Activated CD4-positive, alpha-beta memory T cell treated with anti-CD3 and anti-CD28 coated beads for 36 hours (primary cell): ENCODE measurements at regions of chr5 and their contacts with region 1.

Region 1: GRCh38 chr5:143355720-143356119 is 47.8 kb downstream of the NR3C1 start:
- DNase-seq: peak; percentile 50
- H3K4me3 Mint-ChIP-seq: no peak overlapping the region
- H3K27ac Mint-ChIP-seq: no peak overlapping the region
- H3K4me1 Mint-ChIP-seq: peaks cover 75% of the 10 kb centered on the region
- H3K27me3 Mint-ChIP-seq: no peaks in the 10 kb centered on the region

Region 2: DNA sequence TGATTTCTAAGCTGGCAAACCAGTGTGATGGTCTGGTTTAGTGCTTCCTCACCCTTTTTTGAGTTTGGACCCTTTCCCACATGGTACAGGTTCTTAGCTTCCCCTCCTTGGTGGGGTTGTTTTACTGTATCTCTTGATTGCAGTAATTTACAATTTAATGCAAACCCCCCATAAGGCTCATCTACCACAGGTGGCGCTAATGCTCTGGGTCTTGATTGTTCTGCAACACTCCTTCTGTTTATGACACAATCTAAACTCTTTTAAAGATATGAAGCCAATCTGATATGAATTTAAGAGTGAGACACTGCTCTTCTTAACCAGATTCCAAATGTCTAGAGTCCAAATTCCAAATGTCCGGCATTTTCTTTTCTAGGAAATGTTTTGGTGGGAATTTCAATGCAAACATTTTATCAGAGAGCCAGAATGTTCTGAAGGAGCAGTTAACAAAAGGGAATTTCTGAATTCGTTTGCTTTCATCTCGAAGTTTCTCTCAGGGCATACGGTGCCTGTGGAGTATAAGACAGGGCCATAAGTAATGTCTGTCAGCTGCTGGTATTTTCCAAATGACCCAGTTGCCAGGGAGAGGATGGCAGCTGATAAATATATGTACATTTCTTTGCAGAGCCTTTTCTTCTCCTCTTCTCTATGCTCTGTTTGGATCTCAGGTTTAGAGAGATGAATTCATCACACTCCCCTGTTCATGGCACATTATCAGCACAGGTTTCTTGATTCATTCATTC is 338.8 kb before region 1 on chr5:
- CTCF ChIA-PET with region 1: no interaction called
- POLR2A ChIA-PET with region 1: no interaction called
- intact Hi-C with region 1: no loop called
- DNase-seq: peak; percentile 73
- H3K4me3 Mint-ChIP-seq: no peak overlapping the region
- H3K27ac Mint-ChIP-seq: no peak overlapping the region
- H3K4me1 Mint-ChIP-seq: peaks cover 22% of the 10 kb centered on the region
- H3K27me3 Mint-ChIP-seq: no peaks in the 10 kb centered on the region

Region 3: GRCh38 chr5:143051244-143052058 is 304.3 kb before region 1 on chr5:
- CTCF ChIA-PET with region 1: no interaction called
- POLR2A ChIA-PET with region 1: no interaction called
- intact Hi-C with region 1: loop called (anchors 5 kb)
- DNase-seq: no peak
- H3K4me3 Mint-ChIP-seq: no peak overlapping the region
- H3K27ac Mint-ChIP-seq: no peak overlapping the region
- H3K4me1 Mint-ChIP-seq: peaks cover 66% of the 10 kb centered on the region
- H3K27me3 Mint-ChIP-seq: no peaks in the 10 kb centered on the region

Region 4: GRCh38 chr5:143222287-143223231 is 133.2 kb before region 1 on chr5:
- CTCF ChIA-PET with region 1: no interaction called
- POLR2A ChIA-PET with region 1: no interaction called
- intact Hi-C with region 1: loop called (anchors 2 kb)
- DNase-seq: peak; percentile 75
- H3K4me3 Mint-ChIP-seq: peak overlapping the region; percentile 11
- H3K27ac Mint-ChIP-seq: peak overlapping the region; percentile 69
- H3K4me1 Mint-ChIP-seq: peaks cover 51% of the 10 kb centered on the region
- H3K27me3 Mint-ChIP-seq: no peaks in the 10 kb centered on the region

Region 5: DNA sequence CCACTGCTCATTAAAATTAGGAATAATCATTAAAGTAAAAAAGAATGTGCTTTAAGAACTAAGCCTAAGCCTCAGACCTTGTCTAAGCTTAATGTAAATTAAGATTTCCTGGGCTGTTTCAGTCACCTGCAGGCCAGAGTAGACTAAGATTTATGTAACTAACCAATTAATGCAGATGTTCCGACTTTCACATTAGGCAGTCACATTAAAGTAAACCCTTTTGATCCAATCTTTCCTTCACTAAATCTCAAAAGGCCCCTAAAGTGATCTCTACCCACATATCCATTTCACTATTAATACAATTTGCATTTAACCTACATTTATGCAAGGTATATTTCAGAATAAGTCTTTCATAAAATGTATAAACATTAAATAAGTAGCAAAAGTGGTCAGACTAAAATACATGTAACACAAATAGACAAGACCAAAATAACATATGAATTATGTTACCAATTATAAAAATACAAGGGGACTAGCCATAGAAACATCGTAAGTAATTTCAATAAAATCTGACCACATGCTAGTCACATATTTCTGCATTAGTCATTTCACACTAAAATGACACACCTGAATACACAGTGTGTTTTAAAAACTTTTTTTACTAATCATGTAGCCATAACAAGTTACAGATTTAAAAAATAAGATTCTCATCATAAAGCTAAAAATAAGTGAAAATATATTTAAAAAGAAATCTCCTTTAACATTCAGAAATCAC is 40.1 kb after region 1 on chr5:
- CTCF ChIA-PET with region 1: interaction called, 4 read pairs
- POLR2A ChIA-PET with region 1: no interaction called
- intact Hi-C with region 1: loop called (anchors 2 kb)
- DNase-seq: no peak
- H3K4me3 Mint-ChIP-seq: peak overlapping the region; percentile 62
- H3K27ac Mint-ChIP-seq: no peak overlapping the region
- H3K4me1 Mint-ChIP-seq: peaks cover 67% of the 10 kb centered on the region
- H3K27me3 Mint-ChIP-seq: no peaks in the 10 kb centered on the region